ENCODE measurements at regions of chr7 and their contacts with region 1.

Region 1: DNA sequence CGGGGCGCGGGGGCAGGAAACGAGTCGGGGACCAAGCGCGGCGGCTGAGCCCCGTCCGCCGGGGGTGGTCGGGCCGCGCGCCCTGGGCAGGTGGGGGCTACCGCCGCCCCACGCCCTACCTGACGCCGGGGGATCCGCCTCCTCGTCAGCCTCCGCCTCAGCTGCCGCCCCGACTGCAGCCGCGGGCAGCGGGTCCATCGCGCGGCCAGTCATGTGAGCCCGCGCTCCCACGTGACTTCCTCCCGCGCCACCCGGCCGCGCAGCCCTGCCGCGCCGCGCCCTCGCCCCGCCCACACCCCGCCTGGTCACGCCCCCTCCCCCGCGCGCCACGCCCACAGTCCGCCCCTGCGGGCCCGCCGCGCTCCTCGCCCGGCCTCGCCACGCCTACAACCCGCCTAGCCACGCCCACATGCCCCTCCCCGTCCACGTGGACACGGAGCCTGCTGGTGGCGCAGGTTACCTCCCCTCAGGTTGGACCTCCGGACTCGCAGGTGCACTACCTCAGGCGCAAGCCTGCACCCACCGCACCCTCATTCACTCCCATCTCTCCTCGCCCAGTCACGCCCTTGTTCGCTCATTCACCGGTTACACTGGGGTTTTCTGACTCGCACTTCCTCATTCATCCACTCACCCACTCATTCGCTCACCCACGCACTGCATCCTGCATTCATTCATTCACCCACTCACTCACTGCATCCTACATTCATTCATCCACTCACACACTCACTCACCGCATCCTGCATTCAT is at the start of gene SNX8:
- DNase-seq: peak; percentile 98
- ATAC-seq: peak; percentile 78
- H3K4me3 ChIP-seq: peak within 1 kb of the TSS; percentile 67 to 94 (median 81)
- H3K4me3 Mint-ChIP-seq: no peak within 1 kb of the TSS
- H3K27ac ChIP-seq: peak within 1 kb of the TSS; percentile 95 to 96
- H3K27ac Mint-ChIP-seq: peak within 1 kb of the TSS; percentile 97
- H3K4me1 ChIP-seq: peaks cover 30 to 58% of the 10 kb centered on the region in 2 donors
- H3K4me1 Mint-ChIP-seq: peaks cover 39% of the 10 kb centered on the region
- H3K27me3 ChIP-seq: no peaks in the 10 kb centered on the region
- H3K27me3 Mint-ChIP-seq: no peaks in the 10 kb centered on the region
- CTCF ChIP-seq: no peak
- total RNA-seq, gene SNX8: 126 and 144 TPM in 2 replicates

Region 2: DNA sequence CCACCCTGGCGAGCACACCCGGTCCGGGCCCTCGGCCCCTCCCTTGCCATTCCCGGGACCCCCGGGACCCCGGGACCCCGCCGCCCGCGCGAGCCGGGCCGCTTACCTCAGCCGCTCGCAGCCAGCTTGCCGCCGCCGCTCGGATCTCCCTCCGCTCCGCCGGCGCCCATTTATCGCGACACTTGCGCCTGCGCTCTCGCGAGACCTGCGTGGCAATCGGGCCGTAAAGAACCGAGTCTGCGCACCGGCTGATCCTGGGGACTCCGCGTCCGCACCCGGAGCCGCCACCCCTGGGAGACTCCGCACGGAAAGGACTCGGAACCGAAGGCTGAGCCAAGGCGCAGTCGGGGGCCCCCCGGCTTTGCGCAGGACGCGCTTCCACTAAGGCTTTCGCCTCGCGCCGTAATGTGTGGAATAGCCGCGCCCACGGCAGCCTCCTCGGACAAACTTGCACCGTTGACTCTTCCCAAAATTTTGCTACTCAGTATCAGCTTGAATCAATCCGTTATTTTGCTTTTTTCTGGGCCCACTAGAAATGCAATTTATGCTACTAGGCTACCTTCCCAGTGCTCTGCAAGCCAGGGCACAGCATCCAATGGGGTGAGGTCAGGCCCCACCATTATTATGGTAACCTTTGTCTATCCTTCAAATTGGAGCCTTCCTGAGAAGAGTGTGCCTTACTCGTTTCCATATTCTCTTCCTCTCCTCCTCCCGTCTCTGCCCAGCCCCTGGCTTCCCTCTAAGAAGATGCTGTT is 81.4 kb before region 1 on chr7 and contains the start of gene MAD1L1:
- CTCF ChIA-PET with region 1: interaction called, 4 read pairs
- POLR2A ChIA-PET with region 1: no interaction called
- intact Hi-C with region 1: loop called (anchors 1 kb)
- DNase-seq: peak; percentile 93
- ATAC-seq: peak; percentile 69
- H3K4me3 ChIP-seq: peak within 1 kb of the TSS; percentile 84 to 100 (median 93)
- H3K4me3 Mint-ChIP-seq: peak within 1 kb of the TSS; percentile 91
- H3K27ac ChIP-seq: peak within 1 kb of the TSS; percentile 72 to 76
- H3K27ac Mint-ChIP-seq: peak within 1 kb of the TSS; percentile 87
- H3K4me1 ChIP-seq: peaks cover 34 to 43% of the 10 kb centered on the region in 2 donors
- H3K4me1 Mint-ChIP-seq: peaks cover 51% of the 10 kb centered on the region
- H3K27me3 ChIP-seq: no peaks in the 10 kb centered on the region
- H3K27me3 Mint-ChIP-seq: no peaks in the 10 kb centered on the region
- CTCF ChIP-seq: no peak
- total RNA-seq, gene MAD1L1: 106 and 110 TPM in 2 replicates

Region 3: GRCh38 chr7:2288503-2288902 is 25.9 kb before region 1 on chr7:
- CTCF ChIA-PET with region 1: no interaction called
- POLR2A ChIA-PET with region 1: interaction called, 3 read pairs
- intact Hi-C with region 1: loop called (anchors 1 kb)
- DNase-seq: peak; percentile 87
- ATAC-seq: peak; percentile 86
- H3K4me3 ChIP-seq: peak overlapping the region in 1 of 5 experiments; percentile 19
- H3K4me3 Mint-ChIP-seq: peak overlapping the region; percentile 82
- H3K27ac ChIP-seq: peak overlapping the region; percentile 75 to 76
- H3K27ac Mint-ChIP-seq: peak overlapping the region; percentile 94
- H3K4me1 ChIP-seq: peaks cover 20 to 25% of the 10 kb centered on the region in 2 donors
- H3K4me1 Mint-ChIP-seq: peaks cover 49% of the 10 kb centered on the region
- H3K27me3 ChIP-seq: no peaks in the 10 kb centered on the region
- H3K27me3 Mint-ChIP-seq: no peaks in the 10 kb centered on the region
- CTCF ChIP-seq: no peak

Region 4: DNA sequence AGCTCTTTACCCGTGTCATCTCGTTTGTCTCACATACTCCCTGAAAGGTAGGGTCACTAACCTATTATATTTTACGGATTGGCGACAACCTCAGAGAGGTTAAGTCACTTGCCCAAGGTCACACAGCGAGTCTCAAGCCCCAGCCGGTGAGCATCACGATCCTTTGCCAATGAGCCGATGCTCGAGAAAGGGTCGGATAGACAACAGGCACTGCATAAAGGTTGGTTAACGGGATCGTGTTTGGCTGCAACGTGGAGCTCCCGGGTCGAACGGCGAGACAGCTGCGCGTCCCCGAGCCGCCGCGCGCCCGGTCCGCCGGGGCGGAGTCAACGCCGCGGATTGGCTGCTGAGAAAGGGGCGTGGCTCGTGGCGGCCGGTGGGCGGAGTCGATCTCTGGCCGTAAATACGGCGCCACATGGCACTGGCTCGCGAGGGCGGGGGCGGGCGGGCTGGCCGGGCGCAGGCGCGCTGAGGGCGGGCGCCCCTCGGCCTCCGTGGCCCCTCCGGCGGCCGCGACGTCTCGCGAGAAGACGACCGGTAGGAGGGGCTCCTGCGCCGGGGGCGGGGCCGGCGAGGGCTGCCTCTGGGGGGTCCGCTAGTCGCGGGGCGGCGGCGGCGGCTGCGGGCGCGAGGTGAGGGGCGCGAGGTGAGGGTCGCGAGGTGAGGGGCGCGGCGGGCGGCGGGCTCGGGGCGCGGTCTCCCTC is 88.8 kb after region 1 on chr7 and contains the start of gene CHST12:
- CTCF ChIA-PET with region 1: no interaction called
- POLR2A ChIA-PET with region 1: no interaction called
- intact Hi-C with region 1: loop called (anchors 1 kb)
- DNase-seq: peak; percentile 98
- ATAC-seq: peak; percentile 78
- H3K4me3 ChIP-seq: peak within 1 kb of the TSS; percentile 50 to 83 (median 77)
- H3K4me3 Mint-ChIP-seq: peak within 1 kb of the TSS; percentile 88
- H3K27ac ChIP-seq: peak within 1 kb of the TSS; percentile 27 to 72
- H3K27ac Mint-ChIP-seq: peak within 1 kb of the TSS; percentile 86
- H3K4me1 ChIP-seq: peaks cover 33 to 55% of the 10 kb centered on the region in 2 donors
- H3K4me1 Mint-ChIP-seq: peaks cover 46% of the 10 kb centered on the region
- H3K27me3 ChIP-seq: no peaks in the 10 kb centered on the region
- H3K27me3 Mint-ChIP-seq: no peaks in the 10 kb centered on the region
- CTCF ChIP-seq: no peak
- total RNA-seq, gene CHST12: 25.4 TPM in 2 replicates

Region 5: GRCh38 chr7:2968616-2969374 is 654.4 kb after region 1 on chr7:
- CTCF ChIA-PET with region 1: no interaction called
- POLR2A ChIA-PET with region 1: no interaction called
- intact Hi-C with region 1: no loop called
- DNase-seq: no peak
- ATAC-seq: no peak
- H3K4me3 ChIP-seq: no peak overlapping the region
- H3K4me3 Mint-ChIP-seq: no peak overlapping the region
- H3K27ac ChIP-seq: no peak overlapping the region
- H3K27ac Mint-ChIP-seq: peak overlapping the region; percentile 4
- H3K4me1 ChIP-seq: peaks cover 26 to 31% of the 10 kb centered on the region in 2 donors
- H3K4me1 Mint-ChIP-seq: peaks cover 35% of the 10 kb centered on the region
- H3K27me3 ChIP-seq: no peaks in the 10 kb centered on the region
- H3K27me3 Mint-ChIP-seq: no peaks in the 10 kb centered on the region
- CTCF ChIP-seq: no peak